Mammary epithelial cell (primary cell): ENCODE measurements at regions of chr3 and their contacts with region 1.

Region 1: GRCh38 chr3:141460097-141460704 is 26.6 kb upstream of the RASA2 start:
- DNase-seq: peak; percentile 73
- H3K4me3 ChIP-seq: no peak overlapping the region
- H3K27ac ChIP-seq: no peak overlapping the region
- H3K4me1 ChIP-seq: no peaks in the 10 kb centered on the region
- H3K27me3 ChIP-seq: no peaks in the 10 kb centered on the region
- CTCF ChIP-seq: peak; percentile 84 to 88

Region 2: DNA sequence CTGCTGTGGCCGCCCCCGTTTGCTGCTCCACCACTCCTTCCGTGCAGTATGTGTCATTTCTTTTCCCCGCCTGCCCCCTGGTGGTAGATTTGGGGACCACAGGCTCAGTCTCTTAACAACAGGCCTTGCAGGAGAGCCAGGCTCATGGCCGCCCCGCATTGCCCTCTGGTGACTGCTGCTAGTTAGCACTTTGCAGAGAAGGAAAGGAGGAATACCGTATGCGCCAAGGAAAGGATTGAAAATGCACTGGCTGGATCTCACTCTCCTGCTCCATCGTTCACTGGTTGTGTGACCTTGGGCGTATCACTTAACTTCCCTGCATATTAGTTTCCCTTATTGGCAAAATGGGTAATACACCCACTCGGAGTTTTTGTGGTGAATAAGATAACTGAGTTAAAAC is 267.9 kb before region 1 on chr3:
- CTCF ChIA-PET with region 1: no interaction called
- dilution Hi-C with region 1: no loop called
- in situ Hi-C with region 1: no loop called
- intact Hi-C with region 1: no loop called
- DNase-seq: peak; percentile 87
- H3K4me3 ChIP-seq: no peak overlapping the region
- H3K27ac ChIP-seq: no peak overlapping the region
- H3K4me1 ChIP-seq: peaks cover 6% of the 10 kb centered on the region
- H3K27me3 ChIP-seq: peaks cover 7% of the 10 kb centered on the region
- CTCF ChIP-seq: peak; percentile 98 to 99

Region 3: GRCh38 chr3:141204343-141204742 is 255.9 kb before region 1 on chr3:
- CTCF ChIA-PET with region 1: no interaction called
- dilution Hi-C with region 1: no loop called
- in situ Hi-C with region 1: no loop called
- intact Hi-C with region 1: no loop called
- DNase-seq: no peak
- H3K4me3 ChIP-seq: no peak overlapping the region
- H3K27ac ChIP-seq: no peak overlapping the region
- H3K4me1 ChIP-seq: no peaks in the 10 kb centered on the region
- H3K27me3 ChIP-seq: peaks cover 3% of the 10 kb centered on the region
- CTCF ChIP-seq: no peak

Region 4: DNA sequence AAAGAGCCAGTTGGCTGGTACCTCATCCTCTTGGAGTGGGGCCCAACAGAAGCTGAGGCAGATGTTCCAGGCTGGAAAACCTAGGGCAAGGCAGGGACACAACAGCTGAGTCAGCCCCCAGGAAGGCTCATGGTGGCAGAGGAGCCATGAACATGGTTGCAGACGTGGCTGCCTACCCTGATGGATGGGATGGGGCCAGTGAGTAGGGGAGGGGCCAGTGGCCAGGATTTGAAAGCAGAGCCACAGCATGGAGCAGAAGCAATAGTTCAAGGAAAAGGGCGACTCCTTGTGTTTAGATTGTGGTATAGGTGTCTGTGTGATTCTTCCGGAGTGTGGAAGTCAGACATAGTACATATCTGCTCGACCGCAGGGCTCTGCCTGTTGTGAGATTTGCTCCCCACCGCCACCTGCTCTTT is 204.3 kb before region 1 on chr3:
- CTCF ChIA-PET with region 1: no interaction called
- dilution Hi-C with region 1: no loop called
- in situ Hi-C with region 1: no loop called
- intact Hi-C with region 1: no loop called
- DNase-seq: no peak
- H3K4me3 ChIP-seq: no peak overlapping the region
- H3K27ac ChIP-seq: no peak overlapping the region
- H3K4me1 ChIP-seq: no peaks in the 10 kb centered on the region
- H3K27me3 ChIP-seq: no peaks in the 10 kb centered on the region
- CTCF ChIP-seq: peak; percentile 21 to 27

Region 5: DNA sequence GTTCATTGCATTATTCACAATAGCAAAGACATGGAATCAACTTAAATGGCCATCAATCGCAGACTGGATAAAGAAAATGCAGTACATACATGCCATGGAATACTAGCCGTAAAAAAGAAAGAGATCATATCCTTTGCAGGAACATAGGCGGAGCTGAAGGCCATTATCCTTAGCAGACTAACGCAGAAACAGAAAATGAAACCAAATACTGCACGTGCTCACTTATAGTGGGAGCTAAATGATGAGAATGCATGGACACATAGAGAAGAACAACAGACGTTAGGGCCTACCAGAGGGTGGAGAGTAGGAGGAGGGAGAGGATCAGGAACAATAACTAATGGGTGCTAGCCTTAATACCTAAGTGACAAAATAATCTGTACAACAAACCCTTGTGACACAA is 84.5 kb after region 1 on chr3:
- CTCF ChIA-PET with region 1: no interaction called
- dilution Hi-C with region 1: loop called (anchors 5 kb)
- in situ Hi-C with region 1: no loop called
- intact Hi-C with region 1: no loop called
- DNase-seq: no peak
- H3K4me3 ChIP-seq: no peak overlapping the region
- H3K27ac ChIP-seq: no peak overlapping the region
- H3K4me1 ChIP-seq: no peaks in the 10 kb centered on the region
- H3K27me3 ChIP-seq: no peaks in the 10 kb centered on the region
- CTCF ChIP-seq: no peak

Region 6: GRCh38 chr3:141561426-141562034 is 101.3 kb after region 1 on chr3:
- CTCF ChIA-PET with region 1: interaction called, 9 read pairs
- dilution Hi-C with region 1: no loop called
- in situ Hi-C with region 1: loop called in 1 of 2 experiments (anchors 5 kb)
- intact Hi-C with region 1: loop called (anchors 1 kb)
- DNase-seq: peak; percentile 30
- H3K4me3 ChIP-seq: no peak overlapping the region
- H3K27ac ChIP-seq: no peak overlapping the region
- H3K4me1 ChIP-seq: no peaks in the 10 kb centered on the region
- H3K27me3 ChIP-seq: no peaks in the 10 kb centered on the region
- CTCF ChIP-seq: peak; percentile 98 to 99

Region 7: GRCh38 chr3:141644931-141645330 is 184.7 kb after region 1 on chr3:
- CTCF ChIA-PET with region 1: no interaction called
- dilution Hi-C with region 1: no loop called
- in situ Hi-C with region 1: no loop called
- intact Hi-C with region 1: loop called (anchors 1 kb)
- DNase-seq: peak; percentile 31
- H3K4me3 ChIP-seq: no peak overlapping the region
- H3K27ac ChIP-seq: no peak overlapping the region
- H3K4me1 ChIP-seq: no peaks in the 10 kb centered on the region
- H3K27me3 ChIP-seq: no peaks in the 10 kb centered on the region
- CTCF ChIP-seq: peak; percentile 86 to 89

Region 8: GRCh38 chr3:141913150-141913811 is 453.1 kb after region 1 on chr3:
- CTCF ChIA-PET with region 1: no interaction called
- dilution Hi-C with region 1: no loop called
- in situ Hi-C with region 1: no loop called
- intact Hi-C with region 1: loop called (anchors 10 kb)
- DNase-seq: peak; percentile 42
- H3K4me3 ChIP-seq: no peak overlapping the region
- H3K27ac ChIP-seq: no peak overlapping the region
- H3K4me1 ChIP-seq: no peaks in the 10 kb centered on the region
- H3K27me3 ChIP-seq: no peaks in the 10 kb centered on the region
- CTCF ChIP-seq: peak; percentile 68 to 69

Region 9: GRCh38 chr3:141998669-141999290 is 538.6 kb after region 1 on chr3:
- CTCF ChIA-PET with region 1: no interaction called
- dilution Hi-C with region 1: no loop called
- in situ Hi-C with region 1: no loop called
- intact Hi-C with region 1: loop called (anchors 5 kb)
- DNase-seq: peak; percentile 15
- H3K4me3 ChIP-seq: no peak overlapping the region
- H3K27ac ChIP-seq: no peak overlapping the region
- H3K4me1 ChIP-seq: no peaks in the 10 kb centered on the region
- H3K27me3 ChIP-seq: no peaks in the 10 kb centered on the region
- CTCF ChIP-seq: peak; percentile 42 to 50